RWPE1 (cell line): ENCODE measurements at regions of chr14 and their contacts with region 1.

Region 1: GRCh38 chr14:22391912-22392421 is 197.1 kb downstream of the DAD1 start:
- DNase-seq: peak; percentile 64
- H3K27ac ChIP-seq: no peak overlapping the region
- CTCF ChIP-seq: peak; percentile 63

Region 2: DNA sequence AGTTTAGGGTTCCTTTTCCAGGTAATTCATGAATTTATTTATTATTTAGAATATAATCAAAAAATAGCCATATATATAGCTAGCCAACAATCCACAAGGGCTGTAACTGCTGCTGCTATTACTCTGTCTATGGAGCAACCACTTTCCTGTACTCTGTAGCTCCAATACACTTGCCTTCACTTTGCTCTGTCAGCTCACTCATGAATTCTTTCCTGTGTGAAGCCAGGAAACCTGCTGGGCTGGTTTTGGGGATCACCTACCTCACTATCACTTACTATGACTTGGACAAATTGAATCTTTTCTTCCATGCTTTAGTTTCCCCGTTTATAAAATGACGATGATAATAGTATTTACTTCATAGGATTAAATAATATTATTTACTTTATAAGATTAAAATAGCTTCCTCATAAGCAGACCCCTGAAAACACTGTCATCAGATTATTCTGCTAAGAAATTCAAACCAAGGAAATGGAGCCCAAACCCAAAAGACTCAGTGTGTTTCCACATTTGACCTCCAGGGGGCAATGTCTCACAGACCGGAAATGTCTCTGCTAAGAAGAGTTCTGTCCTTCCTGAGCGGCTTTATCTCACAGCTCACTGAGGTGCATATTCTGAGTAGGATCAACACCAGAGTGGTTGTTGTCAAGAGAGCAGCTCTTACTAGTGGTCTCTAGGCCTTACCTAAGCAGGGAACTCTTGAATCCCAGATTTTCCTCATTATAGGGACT is 260.1 kb before region 1 on chr14:
- CTCF ChIA-PET with region 1: no interaction called
- POLR2A ChIA-PET with region 1: no interaction called
- DNase-seq: no peak
- H3K27ac ChIP-seq: no peak overlapping the region
- CTCF ChIP-seq: 0 out of 2 replicates have a peak, but pooled peaks have one; percentile 29

Region 3: GRCh38 chr14:22427771-22428231 is 35.8 kb after region 1 on chr14:
- CTCF ChIA-PET with region 1: no interaction called
- POLR2A ChIA-PET with region 1: no interaction called
- DNase-seq: peak; percentile 41
- H3K27ac ChIP-seq: peak overlapping the region; percentile 69
- CTCF ChIP-seq: no peak

Region 4: DNA sequence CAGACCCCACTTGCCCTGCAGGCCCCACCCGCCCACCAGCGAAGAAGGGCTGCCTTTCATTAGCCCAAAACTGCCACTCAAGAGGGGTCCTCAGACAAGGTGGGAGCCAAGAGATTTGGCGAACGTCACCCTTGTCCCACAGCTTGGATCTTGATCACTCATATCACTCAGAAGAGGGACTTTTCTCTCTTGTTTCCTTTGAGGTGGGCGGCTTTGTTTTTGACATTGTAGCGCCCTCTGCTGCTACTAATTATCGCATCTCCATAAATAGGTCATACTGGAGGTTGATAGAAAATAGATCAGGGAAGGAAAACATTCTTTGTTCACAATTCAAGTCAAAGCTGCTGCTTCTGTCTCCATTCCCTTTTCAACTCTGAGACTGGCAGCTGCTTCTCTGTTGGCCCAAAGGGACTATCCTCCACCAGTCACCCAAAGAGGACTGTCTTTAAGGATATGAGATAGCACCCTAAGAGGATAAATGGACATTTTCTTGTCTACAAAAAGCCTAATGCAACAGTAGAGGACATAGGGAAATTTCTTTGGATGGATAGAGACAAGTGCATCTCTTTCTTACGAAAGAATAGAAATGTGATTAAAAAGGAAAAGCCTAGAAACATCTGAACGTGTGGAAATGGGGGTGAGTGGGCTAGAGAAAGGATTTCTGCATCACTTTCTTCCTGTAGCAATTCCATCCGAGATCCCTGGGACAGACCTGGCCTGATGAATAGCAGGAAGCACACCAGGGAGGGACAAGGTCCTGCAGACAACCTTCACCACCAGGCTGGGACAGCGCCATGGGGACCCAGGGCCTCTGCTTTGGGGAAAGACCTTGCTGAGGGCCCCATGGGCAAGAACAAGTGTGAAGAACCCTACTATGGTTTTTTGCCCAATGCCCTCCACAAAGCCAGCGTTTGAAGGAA is 81.2 kb after region 1 on chr14:
- CTCF ChIA-PET with region 1: interaction called, 17 read pairs
- POLR2A ChIA-PET with region 1: no interaction called
- DNase-seq: peak; percentile 54
- H3K27ac ChIP-seq: no peak overlapping the region
- CTCF ChIP-seq: peak; percentile 52